ENCODE measurements at regions of chr11 and their contacts with region 1.

Region 1: GRCh38 chr11:10735481-10736475 is 15.3 kb upstream of the CTR9 start:
- DNase-seq: peak; percentile 96
- ATAC-seq: peak; percentile 95
- H3K4me3 ChIP-seq: peak overlapping the region; percentile 24 to 36
- H3K27ac ChIP-seq: peak overlapping the region; percentile 89
- H3K4me1 ChIP-seq: peaks cover 39 to 51% of the 10 kb centered on the region in 2 experiments
- H3K27me3 ChIP-seq: no peaks in the 10 kb centered on the region
- CTCF ChIP-seq: peak; percentile 95 to 99 (median 98)
- POLR2A ChIP-seq: no peak
- RAD21 ChIP-seq: peak; percentile 100

Region 2: DNA sequence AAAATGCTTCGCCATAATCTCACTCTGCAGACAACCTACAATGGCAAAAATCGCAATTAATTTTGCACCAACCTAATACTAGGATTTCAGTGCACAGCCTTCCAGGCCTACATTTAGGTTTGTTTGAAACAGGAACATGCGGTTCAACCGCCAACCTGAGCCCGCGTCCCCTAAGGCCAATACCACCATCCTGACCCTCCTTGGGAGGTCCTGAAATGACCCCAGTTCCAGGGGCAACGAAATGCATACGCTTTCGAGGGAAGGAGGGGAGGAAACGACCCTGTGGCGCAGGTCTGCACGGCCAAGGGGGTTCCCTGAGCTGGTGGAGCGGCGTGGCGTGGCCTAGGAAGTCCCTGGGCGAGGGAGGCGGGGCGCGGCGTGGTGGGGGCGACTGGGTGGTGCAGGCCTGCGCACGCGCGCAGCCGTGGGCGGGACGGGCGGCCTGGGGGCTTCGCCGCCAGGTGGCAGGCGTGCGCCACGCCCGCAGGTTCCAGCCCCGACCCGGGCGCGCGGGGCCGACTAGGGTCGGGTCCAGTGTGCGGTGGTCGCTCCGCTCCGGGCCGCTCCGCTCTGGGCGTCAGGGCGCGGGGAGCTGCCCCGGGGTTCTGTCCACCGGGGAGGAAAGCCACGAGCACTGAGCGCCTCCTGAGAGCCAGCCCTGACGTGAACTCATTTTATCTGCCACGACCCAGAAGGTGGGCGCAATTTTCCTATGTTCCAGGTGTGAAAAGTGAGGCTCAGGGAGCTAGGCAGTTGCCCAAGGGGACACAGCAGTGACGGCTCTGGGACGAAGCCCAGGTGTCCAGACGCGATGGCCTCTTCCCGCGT is 977.8 kb before region 1 on chr11:
- CTCF ChIA-PET with region 1: no interaction called
- POLR2A ChIA-PET with region 1: interaction called, 3 read pairs
- RAD21 ChIA-PET with region 1: no interaction called
- intact Hi-C with region 1: loop called (anchors 2 kb)
- DNase-seq: peak; percentile 42
- ATAC-seq: peak; percentile 59
- H3K4me3 ChIP-seq: peak overlapping the region; percentile 71 to 74
- H3K27ac ChIP-seq: peak overlapping the region; percentile 95
- H3K4me1 ChIP-seq: peaks cover 17 to 34% of the 10 kb centered on the region in 2 experiments
- H3K27me3 ChIP-seq: no peaks in the 10 kb centered on the region
- CTCF ChIP-seq: peak in 2 of 3 experiments; percentile 55 to 66; a peak in 4 of 6 replicates
- POLR2A ChIP-seq: no peak
- RAD21 ChIP-seq: peak; percentile 65

Region 3: DNA sequence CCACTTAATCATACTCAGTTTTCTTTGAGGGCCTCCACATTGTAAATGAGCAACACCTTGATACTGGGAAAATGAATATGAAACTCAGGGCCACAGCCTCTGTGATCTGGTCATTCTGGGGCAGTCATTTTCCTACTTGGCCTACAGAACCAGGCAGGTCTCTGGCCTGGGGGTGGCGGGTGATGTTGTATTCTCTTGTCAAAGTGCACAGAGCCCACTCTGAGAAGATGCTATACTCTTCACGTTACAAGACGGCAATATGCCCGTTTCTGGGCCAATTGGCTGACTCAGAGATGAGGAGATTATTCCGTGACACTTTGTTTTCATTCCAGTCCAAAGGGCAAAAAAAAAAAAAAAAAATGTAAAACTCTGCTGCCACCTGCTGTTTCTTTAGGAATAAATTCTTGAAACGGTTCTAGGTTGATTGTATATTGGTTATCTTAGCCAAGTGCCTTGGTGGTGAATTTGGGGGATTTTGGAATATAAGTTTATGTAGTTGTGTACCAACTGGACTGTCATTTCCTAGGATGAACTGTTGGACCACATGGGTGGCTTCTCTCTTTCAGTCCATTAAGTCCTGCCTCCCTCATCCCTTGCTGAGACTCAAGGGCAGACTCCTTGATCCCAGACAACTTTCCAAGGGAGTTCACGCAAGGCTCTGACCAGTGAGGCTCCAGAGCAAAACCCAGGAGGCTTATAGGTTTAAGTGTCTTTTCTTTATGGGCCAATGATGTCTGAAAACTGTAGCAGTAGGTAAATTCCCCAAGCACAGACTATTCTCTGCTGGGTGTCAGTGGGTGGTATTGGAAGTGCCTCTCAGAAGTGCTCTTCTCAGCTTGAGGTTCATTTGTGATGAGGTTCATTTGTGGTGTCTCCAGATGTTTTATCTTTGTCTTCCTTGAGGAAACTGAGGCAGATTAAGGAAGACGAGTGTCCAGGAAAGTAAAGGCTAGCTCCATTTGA is 412.7 kb before region 1 on chr11:
- CTCF ChIA-PET with region 1: no interaction called
- POLR2A ChIA-PET with region 1: no interaction called
- RAD21 ChIA-PET with region 1: interaction called in 1 of 2 experiments, 3 read pairs
- intact Hi-C with region 1: loop called (anchors 5 kb)
- DNase-seq: peak; percentile 81
- ATAC-seq: peak; percentile 76
- H3K4me3 ChIP-seq: peak overlapping the region; percentile 8 to 32
- H3K27ac ChIP-seq: no peak overlapping the region
- H3K4me1 ChIP-seq: peaks cover 12 to 21% of the 10 kb centered on the region in 2 experiments; a peak in 3 of 4 replicates
- H3K27me3 ChIP-seq: no peaks in the 10 kb centered on the region
- CTCF ChIP-seq: peak; percentile 25 to 87 (median 66); a peak in 5 of 6 replicates
- POLR2A ChIP-seq: no peak
- RAD21 ChIP-seq: peak; percentile 89

Region 4: DNA sequence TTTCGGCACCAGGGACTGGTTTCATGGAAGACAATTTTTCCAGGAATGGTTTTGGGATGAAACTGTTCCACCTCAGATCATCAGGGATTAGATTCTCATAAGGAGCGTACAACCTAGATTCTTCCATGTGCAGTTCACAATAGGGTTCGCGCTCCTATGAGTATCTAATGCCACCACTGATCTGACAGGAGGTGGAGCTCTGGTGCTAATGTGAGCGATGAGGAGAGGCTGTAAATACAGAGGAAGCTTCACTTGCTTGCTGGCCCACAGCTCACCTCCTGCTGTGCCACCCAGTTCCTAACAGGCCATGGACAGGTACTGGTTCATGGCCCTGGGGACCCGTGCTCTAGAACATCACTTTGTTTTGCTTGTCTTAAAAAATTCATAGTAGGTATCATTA is 322.5 kb before region 1 on chr11:
- CTCF ChIA-PET with region 1: interaction called, 10 read pairs
- POLR2A ChIA-PET with region 1: interaction called, 4 read pairs
- RAD21 ChIA-PET with region 1: interaction called, 6 to 8 read pairs
- intact Hi-C with region 1: no loop called
- DNase-seq: peak; percentile 28
- ATAC-seq: peak; percentile 86
- H3K4me3 ChIP-seq: no peak overlapping the region
- H3K27ac ChIP-seq: no peak overlapping the region
- H3K4me1 ChIP-seq: peaks cover 0 to 38% of the 10 kb centered on the region in 2 experiments; a peak in 3 of 4 replicates
- H3K27me3 ChIP-seq: no peaks in the 10 kb centered on the region
- CTCF ChIP-seq: peak; percentile 34 to 75 (median 35); a peak in 4 of 6 replicates
- POLR2A ChIP-seq: no peak
- RAD21 ChIP-seq: peak; percentile 84

Region 5: DNA sequence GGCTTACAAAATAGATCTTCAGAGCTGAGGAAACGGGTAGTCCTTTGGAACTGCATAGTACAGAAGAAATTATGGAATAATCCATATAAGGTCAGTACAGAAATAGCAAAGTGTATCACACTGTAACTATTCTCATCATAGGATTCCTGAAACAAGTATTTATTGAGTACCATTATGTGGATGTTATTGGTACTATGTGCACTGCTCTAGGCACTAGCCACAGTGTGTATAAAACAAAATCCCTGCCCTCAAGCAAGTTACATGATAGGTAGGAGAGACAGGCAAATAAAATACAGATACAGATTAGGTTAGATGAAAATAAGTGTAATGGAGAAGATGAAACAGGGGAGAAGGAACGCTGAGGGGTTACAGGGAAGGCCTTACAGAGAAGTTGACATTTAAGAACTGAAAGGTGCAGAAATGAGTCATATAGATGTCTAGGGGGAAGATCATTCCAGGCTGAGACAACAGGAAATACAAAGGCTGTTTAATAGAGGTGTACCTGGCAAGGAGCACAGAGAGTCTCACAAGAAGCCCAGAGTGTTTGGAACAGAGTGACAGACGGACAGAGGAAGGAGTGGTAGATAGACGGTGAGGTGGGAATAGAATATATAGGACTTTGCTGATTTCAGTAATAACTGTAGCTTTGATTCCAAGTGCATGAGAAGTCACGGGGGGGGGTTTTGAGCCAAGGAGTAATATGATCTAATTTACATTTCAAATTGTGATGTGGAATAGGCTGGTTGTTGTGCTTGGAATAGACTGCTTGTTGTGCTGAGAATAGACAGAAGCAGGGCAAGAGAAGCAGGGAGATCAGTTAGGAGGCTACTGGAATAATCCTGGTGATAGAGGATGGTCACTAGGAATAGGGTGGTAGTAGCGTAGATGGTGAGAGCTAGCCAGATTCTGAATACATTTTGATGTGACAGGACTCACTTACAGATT is 208.5 kb before region 1 on chr11:
- CTCF ChIA-PET with region 1: no interaction called
- POLR2A ChIA-PET with region 1: no interaction called
- RAD21 ChIA-PET with region 1: no interaction called
- intact Hi-C with region 1: loop called (anchors 5 kb)
- DNase-seq: peak; percentile 88
- ATAC-seq: peak; percentile 88
- H3K4me3 ChIP-seq: peak overlapping the region; percentile 0 to 39; a peak in 3 of 4 replicates
- H3K27ac ChIP-seq: peak overlapping the region; percentile 90
- H3K4me1 ChIP-seq: peaks cover 54 to 87% of the 10 kb centered on the region in 2 experiments
- H3K27me3 ChIP-seq: no peaks in the 10 kb centered on the region
- CTCF ChIP-seq: no peak
- POLR2A ChIP-seq: no peak
- RAD21 ChIP-seq: 0 out of 2 replicates have a peak, but pooled peaks have one; percentile 8

Region 6: DNA sequence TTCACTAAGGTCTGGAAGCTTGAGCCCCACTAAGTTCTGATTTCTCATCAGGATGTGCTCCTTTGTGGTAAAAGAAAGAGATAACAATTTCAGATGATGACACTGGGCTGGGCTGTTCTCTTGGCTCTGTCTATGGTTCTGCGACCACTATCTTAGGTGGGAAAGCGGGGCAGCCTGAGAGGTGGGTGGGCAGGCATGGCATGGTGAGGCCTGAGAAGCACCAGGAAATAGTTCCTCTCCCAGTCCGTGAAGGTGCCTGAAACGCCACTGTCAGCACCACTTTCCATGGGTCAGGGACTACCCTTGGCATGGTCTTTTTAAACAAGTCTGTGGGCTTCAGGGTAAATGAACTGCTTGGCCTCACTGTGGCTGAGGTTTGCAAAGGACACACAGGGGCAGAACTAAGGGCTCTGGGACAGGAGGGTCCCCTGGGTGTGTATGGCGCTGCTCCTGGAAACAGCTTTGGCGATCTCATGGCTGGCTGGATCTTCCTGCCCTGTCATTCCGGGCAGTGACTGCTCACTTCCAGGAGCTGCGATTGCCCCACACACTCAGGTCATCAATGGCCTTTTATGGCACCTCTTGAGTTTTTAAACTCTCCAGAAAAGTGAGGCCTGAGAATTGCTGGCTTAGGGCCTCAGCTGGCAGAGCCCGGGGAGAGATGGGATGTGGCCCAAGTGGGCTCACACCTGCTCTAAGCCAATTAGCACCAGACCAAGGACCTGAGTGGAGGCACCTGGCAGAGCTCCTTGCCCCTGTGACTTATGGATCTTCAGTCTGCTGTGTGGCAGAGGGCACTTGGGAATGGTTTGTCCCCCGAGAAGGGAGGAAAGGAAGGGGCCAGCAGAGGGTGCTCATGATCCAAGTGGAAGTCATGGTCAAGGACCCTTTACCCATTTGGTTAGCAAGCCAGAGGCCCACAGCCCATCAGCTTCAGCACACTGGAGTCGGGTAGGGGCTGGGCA is 111.7 kb before region 1 on chr11:
- CTCF ChIA-PET with region 1: interaction called, 11 read pairs
- POLR2A ChIA-PET with region 1: interaction called, 3 read pairs
- RAD21 ChIA-PET with region 1: interaction called, 6 to 11 read pairs
- intact Hi-C with region 1: loop called (anchors 1 kb)
- DNase-seq: peak; percentile 43
- ATAC-seq: peak; percentile 78
- H3K4me3 ChIP-seq: no peak overlapping the region
- H3K27ac ChIP-seq: peak overlapping the region; percentile 65
- H3K4me1 ChIP-seq: peaks cover 31 to 74% of the 10 kb centered on the region in 2 experiments
- H3K27me3 ChIP-seq: no peaks in the 10 kb centered on the region
- CTCF ChIP-seq: peak; percentile 73 to 87 (median 74); a peak in 5 of 6 replicates
- POLR2A ChIP-seq: no peak
- RAD21 ChIP-seq: peak; percentile 93

Measured in HCT116 (cell line).